ENCODE measurements at regions of chr5 and their contacts with region 1.

Region 1: DNA sequence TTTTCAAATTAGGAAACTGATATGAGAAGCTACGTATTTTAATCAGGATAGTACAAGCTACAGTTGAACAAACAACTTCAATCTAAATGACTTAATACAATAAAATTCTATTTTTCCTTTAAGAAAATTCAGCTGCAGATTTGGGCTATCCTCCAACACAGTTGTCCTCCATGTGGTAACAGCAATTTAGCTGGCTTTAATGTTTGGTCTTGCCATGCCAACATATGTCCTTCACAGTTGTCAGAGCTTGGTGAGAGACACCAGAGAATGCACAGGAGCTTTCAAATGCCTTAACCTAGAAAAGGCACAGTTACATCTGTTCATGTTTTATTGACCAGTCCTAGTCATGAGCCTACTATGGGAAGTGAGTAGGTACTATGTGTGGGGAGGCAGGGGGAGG is 10.8 kb downstream of the FAM174A start:
- DNase-seq: no peak
- ATAC-seq: no peak
- H3K4me3 Mint-ChIP-seq: no peak overlapping the region
- H3K27ac Mint-ChIP-seq: no peak overlapping the region
- H3K4me1 Mint-ChIP-seq: peaks cover 3% of the 10 kb centered on the region
- H3K27me3 Mint-ChIP-seq: no peaks in the 10 kb centered on the region
- CTCF ChIP-seq: no peak

Region 2: GRCh38 chr5:100232736-100233135 is 313.3 kb before region 1 on chr5:
- CTCF ChIA-PET with region 1: no interaction called
- POLR2A ChIA-PET with region 1: no interaction called
- intact Hi-C with region 1: no loop called
- DNase-seq: no peak
- ATAC-seq: no peak
- H3K4me3 Mint-ChIP-seq: no peak overlapping the region
- H3K27ac Mint-ChIP-seq: no peak overlapping the region
- H3K4me1 Mint-ChIP-seq: no peaks in the 10 kb centered on the region
- H3K27me3 Mint-ChIP-seq: no peaks in the 10 kb centered on the region
- CTCF ChIP-seq: no peak

Region 3: GRCh38 chr5:100584069-100584468 is 38.1 kb after region 1 on chr5:
- CTCF ChIA-PET with region 1: no interaction called
- POLR2A ChIA-PET with region 1: no interaction called
- intact Hi-C with region 1: loop called (anchors 5 kb)
- DNase-seq: no peak
- ATAC-seq: peak; percentile 50
- H3K4me3 Mint-ChIP-seq: no peak overlapping the region
- H3K27ac Mint-ChIP-seq: no peak overlapping the region
- H3K4me1 Mint-ChIP-seq: peaks cover 16% of the 10 kb centered on the region
- H3K27me3 Mint-ChIP-seq: no peaks in the 10 kb centered on the region
- CTCF ChIP-seq: no peak

Region 4: GRCh38 chr5:100667161-100667630 is 121.2 kb after region 1 on chr5:
- CTCF ChIA-PET with region 1: no interaction called
- POLR2A ChIA-PET with region 1: no interaction called
- intact Hi-C with region 1: no loop called
- DNase-seq: no peak
- ATAC-seq: no peak
- H3K4me3 Mint-ChIP-seq: no peak overlapping the region
- H3K27ac Mint-ChIP-seq: no peak overlapping the region
- H3K4me1 Mint-ChIP-seq: peaks cover 3% of the 10 kb centered on the region
- H3K27me3 Mint-ChIP-seq: peaks cover 3% of the 10 kb centered on the region
- CTCF ChIP-seq: no peak

Measured in activated B cell treated with CpG ODN at 0.5 μM for 24 hours (primary cell).